Activated T-helper 1 cell treated with anti-CD3 and anti-CD28 coated beads, Interleukin-12 subunit alpha, Interleukin-12 subunit beta, Interleukin-2, Interleukin-4 antibody, amounts not matched to agents 30 ng/mL and 10 ng/mL and 1 ng/mL, durations not matched to agents 14 hours and 24 hours and 36 hours (primary cell): ENCODE measurements at regions of chr20 and their contacts with region 1.

Region 1: DNA sequence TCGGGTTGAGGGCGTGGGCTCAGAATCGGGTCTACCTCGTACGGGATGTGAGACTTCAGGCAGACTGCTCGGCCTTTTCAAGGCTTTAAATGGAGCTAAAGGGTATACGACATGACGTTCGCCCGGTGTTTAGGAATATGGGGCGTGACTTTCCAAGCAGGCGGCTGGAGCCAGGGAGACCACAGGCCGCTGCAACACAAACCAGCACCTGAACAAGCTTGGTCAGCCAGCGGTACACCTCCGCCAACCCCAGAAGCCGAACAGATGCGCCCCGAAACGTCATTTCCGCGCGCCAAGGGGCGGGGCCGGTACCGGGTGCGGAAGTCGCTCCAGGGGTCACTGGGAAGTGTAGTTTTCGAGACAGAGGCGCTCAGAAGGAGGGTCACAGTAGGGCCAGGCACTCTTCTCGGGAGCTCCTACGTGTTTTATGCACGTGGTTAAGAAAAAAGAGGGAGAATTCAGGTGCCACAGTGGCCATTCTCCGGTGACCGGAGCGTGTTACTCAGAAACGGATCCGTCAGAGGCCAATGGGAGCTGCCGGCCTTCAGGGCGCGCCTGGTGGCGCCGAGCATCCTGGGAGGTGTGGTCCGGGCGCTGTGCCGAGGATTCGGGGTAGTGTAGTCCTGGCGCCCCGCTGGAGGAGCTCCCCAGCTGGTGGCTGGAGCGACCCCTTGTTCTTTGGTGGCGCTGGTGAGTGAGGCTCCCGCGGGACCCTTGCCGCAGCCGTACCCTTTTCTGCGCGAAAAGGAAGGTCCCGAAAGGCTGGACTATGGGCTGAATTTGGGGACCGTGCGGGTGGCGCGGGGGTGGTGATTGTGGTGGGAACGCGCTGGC is at the start of gene ZNF133:
- DNase-seq: peak; percentile 96
- H3K4me3 Mint-ChIP-seq: peak within 1 kb of the TSS; percentile 94
- H3K27ac Mint-ChIP-seq: peak within 1 kb of the TSS; percentile 97
- H3K4me1 Mint-ChIP-seq: peaks cover 23% of the 10 kb centered on the region
- H3K27me3 Mint-ChIP-seq: peaks cover 16% of the 10 kb centered on the region
- total RNA-seq, gene ZNF133: 7.6 and 7.8 TPM in 2 replicates

Region 2: DNA sequence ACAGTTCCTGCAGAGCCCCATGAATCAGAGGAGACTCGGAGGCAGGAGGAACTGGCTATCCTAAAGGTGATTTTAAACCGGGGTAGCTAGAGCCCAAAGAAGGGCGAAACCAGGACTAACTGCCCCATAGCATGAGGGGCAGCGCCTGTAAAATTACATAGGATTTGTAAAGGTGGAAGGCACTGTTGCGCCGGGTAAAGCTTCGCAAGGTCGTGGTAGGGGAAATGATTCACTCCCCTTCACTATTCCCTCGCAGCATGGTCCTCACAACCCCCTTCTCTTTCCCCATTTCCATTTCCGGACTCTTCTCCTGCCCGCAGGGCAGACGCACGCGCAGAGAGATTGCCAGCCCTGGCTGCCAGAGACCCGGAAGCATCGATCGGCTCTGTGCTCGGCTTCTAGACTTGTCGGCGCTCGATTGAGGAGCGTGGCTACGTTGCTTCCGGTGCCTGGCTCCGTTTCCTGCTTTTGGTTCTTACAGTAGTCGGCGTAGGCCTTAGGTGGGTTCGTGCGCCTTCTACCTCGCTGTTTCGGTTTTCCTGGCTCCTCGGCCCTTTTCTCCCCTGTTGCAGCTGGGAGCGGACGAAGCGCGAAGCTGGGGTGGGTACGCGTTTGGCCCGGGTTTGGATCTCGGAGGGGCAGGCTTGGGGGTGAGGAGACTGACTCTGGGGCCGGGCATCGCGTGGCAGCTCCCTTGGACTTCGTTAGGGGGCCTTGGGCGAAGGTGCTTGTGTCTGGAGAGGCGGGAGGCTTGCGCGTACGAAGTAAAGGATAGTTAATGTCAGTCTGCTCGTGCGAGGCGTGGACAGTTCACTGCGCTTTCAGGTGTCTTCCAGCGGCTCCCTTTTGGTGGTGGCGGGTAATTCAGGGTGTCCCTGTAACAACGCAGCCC is 1558.3 kb before region 1 on chr20 and contains the start of gene SNRPB2:
- intact Hi-C with region 1: loop called (anchors 5 kb)
- DNase-seq: peak; percentile 88
- H3K4me3 Mint-ChIP-seq: peak within 1 kb of the TSS; percentile 98
- H3K27ac Mint-ChIP-seq: peak within 1 kb of the TSS; percentile 98
- H3K4me1 Mint-ChIP-seq: peaks cover 50% of the 10 kb centered on the region
- H3K27me3 Mint-ChIP-seq: peaks cover 8% of the 10 kb centered on the region
- total RNA-seq, gene SNRPB2: 130 and 131 TPM in 2 replicates

Region 3: DNA sequence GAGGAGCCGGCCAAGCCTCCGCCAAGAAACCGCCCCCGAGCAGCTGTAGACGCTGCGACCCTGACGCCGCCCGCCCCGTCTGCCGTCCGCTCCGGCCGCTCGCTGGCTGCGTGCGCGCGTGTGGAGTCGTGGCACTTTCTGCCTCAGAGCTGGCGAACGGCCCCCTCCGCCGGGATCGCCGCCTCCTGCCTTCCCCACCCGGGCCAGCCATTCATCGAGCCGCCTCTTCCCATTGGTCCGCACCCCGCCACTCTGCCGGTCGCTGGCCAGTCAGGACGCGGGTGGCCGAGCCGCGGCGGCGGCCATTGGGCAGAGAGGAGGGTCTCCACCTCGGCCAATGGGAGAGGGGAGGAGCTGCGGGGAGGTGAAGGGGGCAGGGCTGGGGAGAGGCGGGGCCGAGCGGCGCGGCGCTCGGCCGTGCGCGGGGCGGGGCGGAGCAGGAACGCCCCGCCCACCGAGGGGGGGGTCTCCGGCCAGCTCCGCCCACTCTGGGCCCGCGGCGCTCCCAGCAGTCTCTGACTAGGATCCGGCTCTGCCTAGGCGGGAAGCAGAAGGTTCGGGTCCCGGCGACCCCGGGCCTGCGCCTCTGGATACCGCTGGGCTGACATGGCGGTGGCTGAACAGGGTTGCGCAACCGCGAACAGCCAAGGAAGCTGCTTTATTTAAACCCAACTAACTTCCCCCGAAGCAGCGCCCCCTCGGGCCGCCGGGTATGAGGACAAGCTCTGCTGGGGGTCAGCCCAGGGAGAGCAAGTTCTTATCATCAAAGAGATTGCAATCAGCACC is 605.8 kb before region 1 on chr20 and contains the start of gene RRBP1:
- intact Hi-C with region 1: loop called (anchors 1 kb)
- DNase-seq: peak; percentile 97
- H3K4me3 Mint-ChIP-seq: peak within 1 kb of the TSS; percentile 88
- H3K27ac Mint-ChIP-seq: peak within 1 kb of the TSS; percentile 91
- H3K4me1 Mint-ChIP-seq: peaks cover 24% of the 10 kb centered on the region
- H3K27me3 Mint-ChIP-seq: peaks cover 26% of the 10 kb centered on the region
- total RNA-seq, gene RRBP1: 54.8 and 56.0 TPM in 2 replicates

Region 4: DNA sequence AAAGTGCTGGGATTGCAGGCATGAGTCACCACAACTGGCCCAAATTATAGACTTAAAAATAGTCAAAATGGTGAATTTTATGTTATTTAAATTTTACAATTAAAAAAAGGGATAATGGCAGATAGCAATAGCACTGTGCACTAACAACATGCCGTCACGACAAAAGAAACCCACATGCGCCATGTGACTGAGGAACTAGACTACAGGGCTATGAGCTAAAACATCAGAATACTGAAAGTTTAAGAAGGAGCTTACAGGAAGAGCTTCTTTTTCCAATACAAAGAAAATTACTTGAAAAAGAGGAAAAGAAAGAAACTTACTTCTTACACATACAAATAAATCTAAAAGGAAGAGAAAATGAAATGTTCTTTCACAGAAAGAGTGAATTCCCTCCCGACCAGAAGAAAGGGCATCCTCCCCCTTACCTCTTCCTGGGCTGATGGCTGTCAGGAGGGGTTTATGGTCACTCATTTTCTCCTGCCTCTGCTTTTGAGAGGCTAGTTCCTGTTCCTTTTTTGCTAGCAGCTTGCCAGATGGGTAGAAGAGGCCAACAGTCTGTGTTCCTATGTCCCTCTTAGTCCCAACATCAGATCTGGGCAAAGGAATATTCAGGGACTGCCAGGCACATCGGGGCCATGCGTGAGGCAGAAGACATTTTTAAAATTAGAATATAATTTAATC is 124.2 kb after region 1 on chr20:
- intact Hi-C with region 1: loop called (anchors 2 kb)
- DNase-seq: no peak
- H3K4me3 Mint-ChIP-seq: no peak overlapping the region
- H3K27ac Mint-ChIP-seq: no peak overlapping the region
- H3K4me1 Mint-ChIP-seq: peaks cover 6% of the 10 kb centered on the region
- H3K27me3 Mint-ChIP-seq: no peaks in the 10 kb centered on the region

Region 5: GRCh38 chr20:18496740-18497592 is 208.8 kb after region 1 on chr20 and contains the start of gene RBBP9:
- intact Hi-C with region 1: loop called (anchors 2 kb)
- DNase-seq: peak; percentile 70
- H3K4me3 Mint-ChIP-seq: peak within 1 kb of the TSS; percentile 91
- H3K27ac Mint-ChIP-seq: peak within 1 kb of the TSS; percentile 64
- H3K4me1 Mint-ChIP-seq: peaks cover 16% of the 10 kb centered on the region
- H3K27me3 Mint-ChIP-seq: no peaks in the 10 kb centered on the region
- total RNA-seq, gene RBBP9: 18.6 and 18.7 TPM in 2 replicates

Region 6: GRCh38 chr20:18566892-18567742 is 279.0 kb after region 1 on chr20 and contains the start of gene SMIM26:
- intact Hi-C with region 1: loop called (anchors 1 kb)
- DNase-seq: peak; percentile 91
- H3K4me3 Mint-ChIP-seq: peak within 1 kb of the TSS; percentile 95
- H3K27ac Mint-ChIP-seq: peak within 1 kb of the TSS; percentile 95
- H3K4me1 Mint-ChIP-seq: peaks cover 10% of the 10 kb centered on the region
- H3K27me3 Mint-ChIP-seq: no peaks in the 10 kb centered on the region
- total RNA-seq, gene SMIM26: 54.9 and 57.9 TPM in 2 replicates

Region 7: GRCh38 chr20:18793625-18794427 is 505.7 kb after region 1 on chr20:
- intact Hi-C with region 1: loop called (anchors 1 kb)
- DNase-seq: peak; percentile 80
- H3K4me3 Mint-ChIP-seq: peak overlapping the region; percentile 87
- H3K27ac Mint-ChIP-seq: peak overlapping the region; percentile 82
- H3K4me1 Mint-ChIP-seq: peaks cover 12% of the 10 kb centered on the region
- H3K27me3 Mint-ChIP-seq: no peaks in the 10 kb centered on the region